H1 (cell line): ENCODE measurements at regions of chr9 and their contacts with region 1.

Region 1: DNA sequence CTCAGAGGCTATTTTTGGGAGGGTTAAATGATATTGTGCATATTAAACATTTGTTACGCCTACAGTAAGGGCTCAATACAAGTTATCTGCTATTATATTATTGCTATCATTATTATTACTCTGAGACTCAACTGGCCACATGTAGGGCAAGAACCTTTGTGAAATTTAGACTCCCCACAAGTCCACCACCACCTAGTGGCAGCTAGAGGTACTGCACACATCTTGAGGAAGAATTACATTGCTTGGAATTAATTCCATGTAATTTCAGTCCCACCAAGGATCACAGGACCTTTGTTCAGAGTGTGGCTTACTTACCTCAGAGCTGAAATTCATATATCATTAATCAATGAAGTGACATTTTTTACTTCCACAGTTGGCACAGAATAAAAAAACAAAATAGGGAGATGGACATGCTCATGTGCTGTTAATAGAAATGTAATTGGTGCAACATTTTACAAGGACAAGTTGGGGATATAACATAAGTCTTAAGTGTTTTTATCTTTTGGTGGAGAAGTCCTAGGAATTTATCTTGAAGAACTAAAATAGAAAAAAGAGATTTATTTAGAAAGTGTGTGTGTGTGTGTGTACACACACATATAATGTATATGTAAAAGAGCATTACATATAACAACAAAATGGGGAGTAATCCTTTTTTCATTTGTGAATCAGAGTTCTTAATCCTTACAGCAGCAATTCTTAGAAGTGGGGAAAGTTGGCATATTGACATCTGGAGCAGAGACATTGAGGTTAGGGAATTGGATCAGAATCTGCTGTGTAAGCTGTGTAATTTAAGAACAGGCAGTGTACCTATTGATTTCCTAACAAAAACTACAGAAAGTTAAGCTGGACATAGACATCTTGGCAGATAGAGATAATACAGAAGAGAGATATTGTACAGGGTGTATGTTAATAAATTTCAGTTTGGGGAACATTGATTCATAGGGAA is 11.2 kb downstream of the MSANTD3 start:
- DNase-seq: peak in 1 of 2 experiments; percentile 85
- H3K4me3 ChIP-seq: no peak overlapping the region
- H3K27ac ChIP-seq: no peak overlapping the region
- H3K4me1 ChIP-seq: no peaks in the 10 kb centered on the region
- H3K27me3 ChIP-seq: no peaks in the 10 kb centered on the region
- CTCF ChIP-seq: peak in 2 of 3 experiments; percentile 74 to 82; a peak in 3 of 4 replicates
- EP300 ChIP-seq: no peak
- POLR2A ChIP-seq: no peak
- RAD21 ChIP-seq: peak; percentile 60 to 70

Region 2: GRCh38 chr9:100426530-100427428 is 11.4 kb before region 1 on chr9 and contains the start of gene MSANTD3:
- CTCF ChIA-PET with region 1: interaction called, 12 read pairs
- POLR2A ChIA-PET with region 1: interaction called, 16 read pairs
- DNase-seq: peak in 1 of 2 experiments; percentile 74
- H3K4me3 ChIP-seq: peak within 1 kb of the TSS; percentile 78 to 99 (median 89)
- H3K27ac ChIP-seq: peak within 1 kb of the TSS; percentile 72; the same call in 1 of the 2 replicates
- H3K4me1 ChIP-seq: peaks cover 0 to 13% (median 8%) of the 10 kb centered on the region in 4 experiments; a peak in 4 of 7 replicates
- H3K27me3 ChIP-seq: no peaks in the 10 kb centered on the region
- CTCF ChIP-seq: peak in 2 of 3 experiments; percentile 2 to 8; a peak in 2 of 4 replicates
- EP300 ChIP-seq: no peak
- POLR2A ChIP-seq: peak in 1 of 2 experiments; percentile 32; a peak in 2 of 3 replicates
- RAD21 ChIP-seq: no peak
- total RNA-seq, gene MSANTD3: 39.8 and 41.3 TPM in 2 replicates

Region 3: GRCh38 chr9:100449420-100449819 is 11.3 kb after region 1 on chr9:
- CTCF ChIA-PET with region 1: interaction called, 19 read pairs
- POLR2A ChIA-PET with region 1: interaction called, 3 read pairs
- DNase-seq: no peak
- H3K4me3 ChIP-seq: no peak overlapping the region
- H3K27ac ChIP-seq: no peak overlapping the region
- H3K4me1 ChIP-seq: no peaks in the 10 kb centered on the region
- H3K27me3 ChIP-seq: no peaks in the 10 kb centered on the region
- CTCF ChIP-seq: no peak
- EP300 ChIP-seq: no peak
- POLR2A ChIP-seq: no peak
- RAD21 ChIP-seq: no peak

Region 4: GRCh38 chr9:100466171-100466827 is 28.2 kb after region 1 on chr9:
- CTCF ChIA-PET with region 1: interaction called, 13 read pairs
- POLR2A ChIA-PET with region 1: no interaction called
- DNase-seq: no peak
- H3K4me3 ChIP-seq: no peak overlapping the region
- H3K27ac ChIP-seq: no peak overlapping the region
- H3K4me1 ChIP-seq: peaks cover 0 to 6% (median 2%) of the 10 kb centered on the region in 4 experiments; a peak in 3 of 7 replicates
- H3K27me3 ChIP-seq: no peaks in the 10 kb centered on the region
- CTCF ChIP-seq: no peak
- EP300 ChIP-seq: no peak
- POLR2A ChIP-seq: no peak
- RAD21 ChIP-seq: no peak